ENCODE measurements at regions of chr17 and their contacts with region 1.

Region 1: DNA sequence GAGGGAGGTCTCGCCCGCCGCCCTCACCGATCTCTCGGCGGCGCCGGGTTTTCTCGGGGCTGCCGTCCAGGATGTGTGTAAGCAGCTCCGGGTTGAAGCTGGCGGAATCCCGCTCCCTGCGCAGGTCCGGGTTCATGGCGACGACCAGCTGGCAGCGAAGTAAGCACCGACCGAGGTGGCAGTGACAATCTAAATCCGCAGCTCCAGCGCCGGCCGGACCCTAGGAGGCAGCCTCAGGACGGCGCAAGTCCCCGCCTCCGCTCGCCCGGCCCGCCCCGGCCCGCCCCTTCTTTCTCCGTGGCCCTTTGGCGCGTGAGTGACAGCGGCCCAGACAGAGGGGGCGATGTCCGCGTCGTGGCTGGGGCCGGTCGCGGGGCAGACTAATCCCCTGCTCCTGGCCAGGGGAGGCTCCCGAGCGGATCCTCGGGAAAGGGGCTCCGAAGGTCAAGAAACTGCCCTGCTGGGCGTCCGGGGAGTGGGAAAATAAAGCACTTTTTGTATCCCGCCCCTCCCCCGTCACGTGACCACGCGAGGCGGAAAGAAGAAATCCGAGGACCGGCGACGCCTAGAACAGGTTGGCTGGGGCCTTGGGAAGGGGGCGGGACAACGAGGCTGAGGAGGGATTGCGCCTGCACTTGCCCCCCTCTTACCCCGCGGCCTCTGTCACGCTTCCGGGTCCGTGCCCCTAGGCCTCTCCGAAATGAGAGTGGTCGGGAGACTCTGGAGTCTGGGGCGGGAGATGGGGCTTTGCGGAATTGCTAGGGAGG is at the starts of genes ACOX1 and TEN1:
- DNase-seq: peak; percentile 89 to 97 (median 94)
- ATAC-seq: peak; percentile 92
- H3K4me3 ChIP-seq: peak within 1 kb of the TSS; percentile 99
- H3K4me3 Mint-ChIP-seq: peak within 1 kb of the TSS; percentile 95
- H3K27ac ChIP-seq: peak within 1 kb of the TSS; percentile 91 to 94
- H3K27ac Mint-ChIP-seq: peak within 1 kb of the TSS; percentile 100
- H3K4me1 ChIP-seq: peaks cover 19% of the 10 kb centered on the region
- H3K4me1 Mint-ChIP-seq: peaks cover 51% of the 10 kb centered on the region
- H3K27me3 ChIP-seq: no peaks in the 10 kb centered on the region
- H3K27me3 Mint-ChIP-seq: no peaks in the 10 kb centered on the region
- CTCF ChIP-seq: no peak
- total RNA-seq, gene ACOX1: 14.5 to 17.9 TPM
- total RNA-seq, gene TEN1: 13.0 to 13.8 TPM

Region 2: GRCh38 chr17:75940724-75941441 is 38.2 kb before region 1 on chr17 and contains the start of gene FBF1:
- CTCF ChIA-PET with region 1: interaction called, 3 read pairs
- POLR2A ChIA-PET with region 1: interaction called, 7 read pairs
- intact Hi-C with region 1: loop called in 1 of 2 experiments (anchors 1 kb)
- DNase-seq: peak; percentile 73 to 92 (median 84)
- ATAC-seq: peak; percentile 100
- H3K4me3 ChIP-seq: peak within 1 kb of the TSS; percentile 84
- H3K4me3 Mint-ChIP-seq: peak within 1 kb of the TSS; percentile 92
- H3K27ac ChIP-seq: peak within 1 kb of the TSS in 1 of 2 donors; percentile 82
- H3K27ac Mint-ChIP-seq: peak within 1 kb of the TSS; percentile 81
- H3K4me1 ChIP-seq: peaks cover 15% of the 10 kb centered on the region
- H3K4me1 Mint-ChIP-seq: peaks cover 18% of the 10 kb centered on the region
- H3K27me3 ChIP-seq: no peaks in the 10 kb centered on the region
- H3K27me3 Mint-ChIP-seq: no peaks in the 10 kb centered on the region
- CTCF ChIP-seq: no peak
- total RNA-seq, gene FBF1: 21.2 to 23.9 TPM

Region 3: DNA sequence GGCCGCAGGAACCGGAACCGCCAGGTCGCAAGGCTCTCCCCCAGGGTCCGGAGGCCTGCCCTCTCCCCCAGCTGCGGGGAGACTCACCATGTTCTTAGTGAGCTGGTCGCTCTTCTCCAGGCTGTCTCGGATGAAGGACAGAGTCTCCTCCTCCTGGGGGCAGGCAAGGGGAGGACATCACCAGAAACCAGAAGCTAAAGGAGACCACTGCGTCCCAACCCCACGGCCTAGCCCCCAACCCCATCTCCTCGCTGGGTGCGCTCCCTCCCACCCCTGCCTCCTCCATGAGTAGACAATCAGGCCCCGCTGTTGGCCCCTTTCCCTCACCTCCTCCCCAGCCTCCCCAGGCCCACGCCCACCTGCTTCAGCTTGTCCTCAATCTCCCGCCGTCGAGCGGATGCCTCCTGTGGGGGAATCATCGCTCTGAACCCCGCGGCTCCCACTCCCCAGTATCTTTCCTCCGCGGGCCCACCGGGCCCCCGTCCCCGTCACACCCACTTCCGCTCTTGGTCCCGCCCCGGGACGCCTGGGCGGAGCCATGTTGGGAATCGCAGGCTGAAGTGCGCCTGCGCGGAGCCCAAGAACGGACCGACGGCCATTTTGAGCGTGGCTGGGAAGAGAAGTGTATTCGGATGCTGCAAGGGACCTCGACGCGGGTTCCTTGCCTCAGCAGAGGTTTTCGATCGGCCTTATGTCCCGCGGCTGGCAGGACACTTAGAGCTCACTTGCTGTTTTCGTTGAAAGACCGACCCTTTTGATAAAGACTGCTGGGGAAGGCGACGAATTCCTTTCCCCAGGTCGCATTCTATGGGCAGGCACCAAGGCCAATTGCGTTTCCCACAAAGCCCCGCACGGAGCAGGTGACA is 124.4 kb after region 1 on chr17 and contains the start of gene EXOC7:
- CTCF ChIA-PET with region 1: no interaction called
- POLR2A ChIA-PET with region 1: no interaction called
- intact Hi-C with region 1: loop called in 1 of 2 experiments (anchors 1 kb)
- DNase-seq: peak; percentile 86 to 97 (median 92)
- ATAC-seq: peak; percentile 94
- H3K4me3 ChIP-seq: peak within 1 kb of the TSS; percentile 85
- H3K4me3 Mint-ChIP-seq: peak within 1 kb of the TSS; percentile 98
- H3K27ac ChIP-seq: peak within 1 kb of the TSS; percentile 68 to 82
- H3K27ac Mint-ChIP-seq: peak within 1 kb of the TSS; percentile 90
- H3K4me1 ChIP-seq: peaks cover 32% of the 10 kb centered on the region
- H3K4me1 Mint-ChIP-seq: peaks cover 38% of the 10 kb centered on the region
- H3K27me3 ChIP-seq: no peaks in the 10 kb centered on the region
- H3K27me3 Mint-ChIP-seq: no peaks in the 10 kb centered on the region
- CTCF ChIP-seq: no peak
- total RNA-seq, gene EXOC7: 88.1 to 90.6 TPM